ENCODE measurements at regions of chr14 and their contacts with region 1.

Region 1: GRCh38 chr14:91177073-91178034 is 63.5 kb downstream of the DGLUCY start:
- DNase-seq: peak; percentile 64
- H3K4me3 Mint-ChIP-seq: no peak overlapping the region
- H3K27ac Mint-ChIP-seq: peak overlapping the region; percentile 86
- H3K4me1 Mint-ChIP-seq: peaks cover 35% of the 10 kb centered on the region
- H3K27me3 Mint-ChIP-seq: no peaks in the 10 kb centered on the region

Region 2: GRCh38 chr14:90903101-90903500 is 274.3 kb before region 1 on chr14:
- intact Hi-C with region 1: loop called (anchors 1 kb)
- DNase-seq: peak; percentile 33
- H3K4me3 Mint-ChIP-seq: no peak overlapping the region
- H3K27ac Mint-ChIP-seq: no peak overlapping the region
- H3K4me1 Mint-ChIP-seq: peaks cover 35% of the 10 kb centered on the region
- H3K27me3 Mint-ChIP-seq: no peaks in the 10 kb centered on the region

Region 3: DNA sequence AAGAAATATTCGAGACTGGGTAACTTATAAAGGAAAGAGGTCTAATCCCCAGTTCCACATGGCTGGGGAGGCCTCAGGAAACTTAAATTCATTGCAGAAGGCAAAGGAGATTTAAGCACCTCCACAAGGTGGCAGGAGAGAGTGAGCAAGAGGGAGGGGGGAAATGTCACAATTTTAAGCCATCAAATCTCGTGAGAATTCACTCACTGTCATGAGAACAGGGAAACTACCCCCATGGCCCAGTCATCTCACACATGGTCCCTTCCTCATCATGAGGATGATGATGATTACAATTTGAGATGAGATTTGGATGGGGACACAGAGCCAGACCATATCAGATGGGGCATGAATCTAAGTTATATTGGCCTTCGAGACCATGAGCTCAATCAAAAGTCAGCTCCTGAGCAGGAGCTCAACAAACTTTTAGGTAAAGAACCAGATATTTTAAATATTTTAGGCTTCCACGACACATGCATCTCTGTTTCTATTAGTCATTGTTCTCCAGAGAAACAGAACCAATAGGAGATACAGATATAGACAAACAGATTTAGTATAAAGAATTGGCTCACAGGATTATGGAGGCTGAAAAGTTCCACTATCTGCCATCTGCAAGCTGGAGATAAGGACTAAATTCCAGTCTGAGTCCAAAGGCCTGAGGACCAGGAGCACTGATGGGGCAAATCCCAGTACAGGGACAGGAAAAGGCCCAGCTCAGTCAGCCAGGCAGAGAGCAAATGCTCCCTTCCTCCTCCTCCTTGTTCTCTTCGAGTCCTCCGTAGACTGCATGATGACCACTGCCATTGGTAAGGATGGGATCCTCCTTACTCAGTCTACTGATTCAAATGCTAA is 38.6 kb before region 1 on chr14:
- intact Hi-C with region 1: loop called (anchors 2 kb)
- DNase-seq: peak; percentile 42
- H3K4me3 Mint-ChIP-seq: no peak overlapping the region
- H3K27ac Mint-ChIP-seq: peak overlapping the region; percentile 61
- H3K4me1 Mint-ChIP-seq: peaks cover 57% of the 10 kb centered on the region
- H3K27me3 Mint-ChIP-seq: no peaks in the 10 kb centered on the region

Region 4: DNA sequence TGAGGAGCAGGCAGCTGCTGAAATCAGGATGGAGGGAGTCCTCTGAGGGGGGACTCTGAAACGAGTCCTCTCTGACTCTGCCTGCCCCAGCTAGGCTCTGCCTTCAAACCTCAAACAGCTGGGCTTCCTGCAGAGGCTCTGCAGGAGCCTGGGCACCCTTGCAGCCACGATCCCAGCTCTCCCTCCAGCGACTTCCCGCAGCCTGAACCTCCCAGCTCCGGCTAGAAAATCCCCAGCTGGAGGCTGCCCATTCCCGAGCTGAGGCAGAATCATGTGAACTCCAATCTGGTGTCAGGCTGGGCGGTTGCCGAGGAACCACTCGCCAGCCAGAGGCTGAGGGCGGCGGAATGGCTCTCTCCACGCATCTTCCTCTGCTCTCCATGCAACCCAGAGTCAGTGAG is 67.1 kb after region 1 on chr14 and contains the start of gene GPR68:
- intact Hi-C with region 1: loop called (anchors 1 kb)
- DNase-seq: no peak
- H3K4me3 Mint-ChIP-seq: peak within 1 kb of the TSS; percentile 85
- H3K27ac Mint-ChIP-seq: peak within 1 kb of the TSS; percentile 88
- H3K4me1 Mint-ChIP-seq: peaks cover 89% of the 10 kb centered on the region
- H3K27me3 Mint-ChIP-seq: no peaks in the 10 kb centered on the region
- total RNA-seq, gene GPR68: 4.5 and 5.4 TPM in 2 replicates

Region 5: GRCh38 chr14:91286530-91286937 is 109.2 kb after region 1 on chr14:
- intact Hi-C with region 1: loop called (anchors 1 kb)
- DNase-seq: peak; percentile 66
- H3K4me3 Mint-ChIP-seq: no peak overlapping the region
- H3K27ac Mint-ChIP-seq: peak overlapping the region; percentile 32
- H3K4me1 Mint-ChIP-seq: peaks cover 25% of the 10 kb centered on the region
- H3K27me3 Mint-ChIP-seq: no peaks in the 10 kb centered on the region

Region 6: GRCh38 chr14:91649930-91650329 is 472.6 kb after region 1 on chr14:
- intact Hi-C with region 1: no loop called
- DNase-seq: no peak
- H3K4me3 Mint-ChIP-seq: no peak overlapping the region
- H3K27ac Mint-ChIP-seq: no peak overlapping the region
- H3K4me1 Mint-ChIP-seq: peaks cover 5% of the 10 kb centered on the region
- H3K27me3 Mint-ChIP-seq: peaks cover 4% of the 10 kb centered on the region